A549 (cell line): ENCODE measurements at regions of chr17 and their contacts with region 1.

Region 1: DNA sequence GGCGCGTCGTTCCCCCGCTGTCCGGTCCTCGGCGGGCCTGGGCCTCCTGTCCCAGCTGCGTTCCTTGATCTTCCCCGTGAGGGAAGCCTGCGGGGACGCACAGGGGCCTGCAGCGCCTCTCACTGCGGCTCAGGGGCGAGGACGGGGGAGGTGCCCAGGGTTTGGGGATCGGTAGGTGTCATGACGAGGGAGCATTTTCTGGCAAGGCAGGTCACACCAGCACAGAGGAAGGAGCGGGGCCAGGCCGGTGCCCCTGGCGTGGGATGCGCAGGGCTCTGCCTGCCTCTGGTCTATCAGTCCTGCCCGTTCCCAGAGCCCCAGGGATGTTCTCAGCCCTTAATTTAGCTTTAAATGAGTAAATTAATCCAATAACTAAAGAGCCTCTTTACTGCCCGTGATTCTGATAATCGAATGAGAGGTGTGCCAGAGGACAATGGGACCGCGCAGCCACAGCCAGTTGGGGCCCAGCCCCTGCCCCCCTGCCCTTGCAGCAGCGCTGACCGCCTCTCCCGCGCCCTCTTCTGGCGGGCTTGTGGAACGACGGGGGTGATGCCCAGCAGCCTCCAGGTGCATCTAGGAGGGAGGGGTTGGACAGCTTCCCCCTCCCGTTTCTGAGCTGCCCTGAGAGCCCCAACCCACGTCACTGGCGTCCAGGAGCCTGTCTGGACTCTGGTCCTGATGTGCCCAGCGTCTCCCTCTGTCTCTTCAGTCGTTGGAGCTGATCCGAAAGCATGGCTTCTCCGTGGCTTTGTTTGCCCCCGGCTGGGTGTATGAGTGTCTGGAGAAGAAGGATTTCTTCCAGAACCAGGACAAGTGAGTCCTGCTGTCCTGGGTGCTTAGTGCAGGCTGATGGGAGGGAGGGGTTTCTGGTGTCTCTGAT is 7.9 kb downstream of the ENGASE start:
- DNase-seq: peak; percentile 57 to 89
- ATAC-seq: peak; percentile 44 to 83; a peak in 3 of 6 replicates
- H3K4me3 ChIP-seq: no peak overlapping the region
- H3K27ac ChIP-seq: no peak overlapping the region
- H3K4me1 ChIP-seq: no peaks in the 10 kb centered on the region
- CTCF ChIP-seq: peak; percentile 89
- EP300 ChIP-seq: no peak
- POLR2A ChIP-seq: no peak
- RAD21 ChIP-seq: peak; percentile 52 to 73

Region 2: GRCh38 chr17:79019632-79020584 is 62.6 kb before region 1 on chr17:
- CTCF ChIA-PET with region 1: interaction called, 200 read pairs
- POLR2A ChIA-PET with region 1: no interaction called
- DNase-seq: peak; percentile 71 to 82
- ATAC-seq: peak; percentile 48 to 62; a peak in 3 of 6 replicates
- H3K4me3 ChIP-seq: no peak overlapping the region
- H3K27ac ChIP-seq: peak overlapping the region; percentile 32 to 43; a peak in 4 of 6 replicates
- H3K4me1 ChIP-seq: peaks cover 15% of the 10 kb centered on the region
- CTCF ChIP-seq: peak; percentile 98
- EP300 ChIP-seq: no peak; a peak in 1 of 5 replicates
- POLR2A ChIP-seq: no peak
- RAD21 ChIP-seq: peak; percentile 91 to 96

Region 3: GRCh38 chr17:79045842-79046196 is 36.7 kb before region 1 on chr17:
- CTCF ChIA-PET with region 1: interaction called, 289 read pairs
- POLR2A ChIA-PET with region 1: no interaction called
- DNase-seq: peak; percentile 78 to 89
- ATAC-seq: peak; percentile 73 to 88
- H3K4me3 ChIP-seq: no peak overlapping the region
- H3K27ac ChIP-seq: no peak overlapping the region
- H3K4me1 ChIP-seq: peaks cover 6% of the 10 kb centered on the region; the same call in 2 of the 3 replicates
- CTCF ChIP-seq: peak; percentile 92
- EP300 ChIP-seq: no peak
- POLR2A ChIP-seq: no peak
- RAD21 ChIP-seq: peak; percentile 83

Region 4: DNA sequence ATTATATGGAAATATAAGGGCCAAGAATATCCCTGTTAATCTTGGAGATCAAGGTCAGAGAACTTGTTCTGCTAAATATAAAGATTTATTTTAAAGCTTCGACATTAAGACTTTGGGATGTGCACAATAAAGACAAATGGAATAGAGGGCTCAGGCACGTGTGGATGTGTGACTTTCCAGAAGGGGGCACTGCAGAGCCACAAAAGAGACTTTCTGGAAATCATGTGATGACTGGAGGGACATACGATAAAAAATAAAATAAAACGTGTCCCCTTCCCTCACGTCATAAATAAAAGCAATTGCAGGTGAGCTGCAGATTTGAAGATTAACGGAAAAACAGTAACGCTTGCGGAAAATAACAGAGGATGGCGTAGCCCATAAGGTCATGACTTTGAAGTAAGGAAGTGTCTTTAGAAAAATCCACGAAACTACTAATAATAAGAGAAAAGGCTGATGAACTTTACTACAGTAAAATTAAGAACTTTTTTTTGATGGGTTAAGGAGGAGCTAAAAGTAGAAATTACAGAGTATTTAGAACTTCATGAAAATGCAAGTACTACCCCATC is 17.4 kb before region 1 on chr17:
- CTCF ChIA-PET with region 1: interaction called, 147 read pairs
- POLR2A ChIA-PET with region 1: no interaction called
- DNase-seq: peak; percentile 57 to 73
- ATAC-seq: peak; percentile 64 to 81; a peak in 5 of 6 replicates
- H3K4me3 ChIP-seq: no peak overlapping the region
- H3K27ac ChIP-seq: no peak overlapping the region
- H3K4me1 ChIP-seq: no peaks in the 10 kb centered on the region
- CTCF ChIP-seq: peak; percentile 80
- EP300 ChIP-seq: no peak
- POLR2A ChIP-seq: no peak
- RAD21 ChIP-seq: peak; percentile 69 to 76

Region 5: GRCh38 chr17:79109570-79109969 is 27.0 kb after region 1 on chr17:
- CTCF ChIA-PET with region 1: interaction called, 52 read pairs
- POLR2A ChIA-PET with region 1: no interaction called
- DNase-seq: peak in 1 of 2 experiments; percentile 50
- ATAC-seq: peak in 1 of 2 experiments; percentile 74; a peak in 3 of 6 replicates
- H3K4me3 ChIP-seq: no peak overlapping the region
- H3K27ac ChIP-seq: no peak overlapping the region
- H3K4me1 ChIP-seq: no peaks in the 10 kb centered on the region
- CTCF ChIP-seq: peak; percentile 50
- EP300 ChIP-seq: no peak
- POLR2A ChIP-seq: no peak
- RAD21 ChIP-seq: peak; percentile 22 to 41; a peak in 2 of 5 replicates